ENCODE measurements at regions of chr20 and their contacts with region 1.

Region 1: GRCh38 chr20:45322952-45323383 is 14.9 kb upstream of the MATN4 start:
- DNase-seq: peak; percentile 53
- ATAC-seq: peak; percentile 80

Region 2: GRCh38 chr20:44714696-44715482 is 608.1 kb before region 1 on chr20 and contains the start of gene CCN5:
- intact Hi-C with region 1: no loop called
- DNase-seq: peak; percentile 95
- ATAC-seq: peak; percentile 84
- total RNA-seq, gene CCN5: 19.5 TPM

Region 3: GRCh38 chr20:45436732-45437391 is 113.9 kb after region 1 on chr20:
- intact Hi-C with region 1: loop called (anchors 5 kb)
- DNase-seq: peak; percentile 94
- ATAC-seq: peak; percentile 94

Region 4: DNA sequence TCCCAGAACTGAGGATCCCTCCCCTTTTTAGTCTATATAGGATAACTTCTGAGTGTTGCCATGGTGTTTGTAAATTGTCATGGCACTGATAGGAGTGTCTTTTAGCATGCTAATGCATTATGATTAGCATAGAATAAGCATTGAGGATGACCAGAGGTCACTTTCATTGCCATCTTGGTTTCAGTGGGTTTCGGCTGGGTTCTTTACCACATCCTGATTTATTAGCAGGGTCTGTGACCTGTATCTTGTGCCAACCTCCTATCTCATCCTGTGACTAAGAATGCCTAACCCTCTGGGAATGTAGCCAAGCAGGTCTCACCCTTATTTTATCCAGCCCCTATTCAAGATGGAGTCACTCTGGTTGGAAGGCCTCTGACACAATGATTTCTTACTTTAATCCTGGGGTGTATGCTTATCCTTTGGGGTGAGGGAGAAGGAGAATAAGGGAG is 166.1 kb after region 1 on chr20:
- intact Hi-C with region 1: no loop called
- DNase-seq: no peak
- ATAC-seq: no peak

Region 5: DNA sequence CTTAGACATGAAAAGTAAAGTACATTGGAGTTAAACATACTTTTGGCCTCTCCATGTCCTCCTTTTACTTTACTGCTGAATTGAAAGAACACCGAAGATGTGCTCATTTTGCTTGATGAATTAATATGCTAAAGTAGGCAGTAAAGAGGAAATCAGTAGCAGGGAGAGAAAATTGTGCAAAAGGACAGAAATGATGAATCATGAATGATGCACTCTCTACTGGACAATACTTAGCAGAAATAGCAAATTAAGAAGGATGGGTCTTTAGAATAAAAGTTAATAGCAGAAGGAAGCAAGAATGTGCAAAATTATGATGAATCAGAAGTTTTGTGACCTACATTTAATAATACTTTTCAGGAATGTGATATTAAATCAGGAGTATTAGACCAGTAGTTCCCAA is 200.9 kb after region 1 on chr20:
- intact Hi-C with region 1: no loop called
- DNase-seq: no peak
- ATAC-seq: no peak

Region 6: GRCh38 chr20:45771182-45771759 is 448.3 kb after region 1 on chr20:
- intact Hi-C with region 1: loop called (anchors 10 kb)
- DNase-seq: peak; percentile 83
- ATAC-seq: peak; percentile 86